ENCODE measurements at regions of chr9 and their contacts with region 1.

Region 1: GRCh38 chr9:123599781-123600180 is 243.8 kb downstream of the CRB2 start:
- DNase-seq: no peak
- ATAC-seq: no peak
- H3K4me3 ChIP-seq: no peak overlapping the region
- H3K27ac ChIP-seq: no peak overlapping the region
- H3K4me1 ChIP-seq: no peaks in the 10 kb centered on the region
- H3K27me3 ChIP-seq: no peaks in the 10 kb centered on the region
- CTCF ChIP-seq: no peak
- POLR2A ChIP-seq: no peak
- RAD21 ChIP-seq: no peak

Region 2: DNA sequence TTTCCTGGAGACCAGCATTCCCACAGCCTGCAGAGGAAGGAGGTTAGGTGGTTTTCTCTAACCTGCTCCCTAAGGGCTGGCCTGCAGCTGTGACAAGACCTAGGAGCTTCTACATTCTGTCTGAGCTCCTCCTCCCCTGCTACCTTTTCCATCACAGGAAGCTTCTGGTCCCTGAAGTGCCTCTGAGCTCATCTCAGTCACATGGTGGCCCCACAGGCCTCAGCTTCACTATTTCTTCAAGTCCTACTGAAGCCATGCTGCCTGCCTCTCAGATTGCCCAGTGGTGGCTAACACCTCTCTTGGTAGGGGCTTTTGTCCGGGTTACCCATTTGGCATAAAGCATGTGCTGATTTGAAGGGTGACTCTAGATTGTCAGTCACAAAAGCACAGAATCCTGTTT is 15.6 kb after region 1 on chr9:
- CTCF ChIA-PET with region 1: interaction called, 3 read pairs
- POLR2A ChIA-PET with region 1: interaction called, 10 read pairs
- dilution Hi-C with region 1: no loop called
- in situ Hi-C with region 1: no loop called
- intact Hi-C with region 1: no loop called
- DNase-seq: no peak
- ATAC-seq: no peak
- H3K4me3 ChIP-seq: no peak overlapping the region
- H3K27ac ChIP-seq: no peak overlapping the region
- H3K4me1 ChIP-seq: no peaks in the 10 kb centered on the region
- H3K27me3 ChIP-seq: no peaks in the 10 kb centered on the region
- CTCF ChIP-seq: no peak
- POLR2A ChIP-seq: no peak
- RAD21 ChIP-seq: no peak

Measured in IMR-90 (cell line).